ENCODE measurements at regions of chr13 and their contacts with region 1.

Region 1: GRCh38 chr13:59281453-59281852 is 882.3 kb downstream of the DIAPH3 start:
- DNase-seq: no peak
- H3K4me3 Mint-ChIP-seq: no peak overlapping the region
- H3K27ac Mint-ChIP-seq: no peak overlapping the region
- H3K4me1 Mint-ChIP-seq: no peaks in the 10 kb centered on the region
- H3K27me3 Mint-ChIP-seq: no peaks in the 10 kb centered on the region

Region 2: GRCh38 chr13:58869566-58869965 is 411.9 kb before region 1 on chr13:
- CTCF ChIA-PET with region 1: no interaction called
- POLR2A ChIA-PET with region 1: no interaction called
- DNase-seq: no peak
- H3K4me3 Mint-ChIP-seq: no peak overlapping the region
- H3K27ac Mint-ChIP-seq: no peak overlapping the region
- H3K4me1 Mint-ChIP-seq: no peaks in the 10 kb centered on the region
- H3K27me3 Mint-ChIP-seq: no peaks in the 10 kb centered on the region

Region 3: GRCh38 chr13:59677966-59678814 is 396.7 kb after region 1 on chr13:
- CTCF ChIA-PET with region 1: no interaction called
- POLR2A ChIA-PET with region 1: interaction called, 11 read pairs
- DNase-seq: peak; percentile 38
- H3K4me3 Mint-ChIP-seq: no peak overlapping the region
- H3K27ac Mint-ChIP-seq: no peak overlapping the region
- H3K4me1 Mint-ChIP-seq: peaks cover 2% of the 10 kb centered on the region
- H3K27me3 Mint-ChIP-seq: no peaks in the 10 kb centered on the region